ENCODE measurements at regions of chr3 and their contacts with region 1.

Region 1: GRCh38 chr3:128075516-128076482 is 23.6 kb downstream of the SEC61A1 start:
- DNase-seq: peak; percentile 76 to 92
- H3K4me3 ChIP-seq: peak overlapping the region; percentile 51 to 62
- H3K27ac ChIP-seq: peak overlapping the region; percentile 51 to 64
- H3K4me1 ChIP-seq: peaks cover 0 to 26% (median 21%) of the 10 kb centered on the region in 4 donors
- H3K27me3 ChIP-seq: no peaks in the 10 kb centered on the region
- CTCF ChIP-seq: peak; percentile 91 to 98

Region 2: DNA sequence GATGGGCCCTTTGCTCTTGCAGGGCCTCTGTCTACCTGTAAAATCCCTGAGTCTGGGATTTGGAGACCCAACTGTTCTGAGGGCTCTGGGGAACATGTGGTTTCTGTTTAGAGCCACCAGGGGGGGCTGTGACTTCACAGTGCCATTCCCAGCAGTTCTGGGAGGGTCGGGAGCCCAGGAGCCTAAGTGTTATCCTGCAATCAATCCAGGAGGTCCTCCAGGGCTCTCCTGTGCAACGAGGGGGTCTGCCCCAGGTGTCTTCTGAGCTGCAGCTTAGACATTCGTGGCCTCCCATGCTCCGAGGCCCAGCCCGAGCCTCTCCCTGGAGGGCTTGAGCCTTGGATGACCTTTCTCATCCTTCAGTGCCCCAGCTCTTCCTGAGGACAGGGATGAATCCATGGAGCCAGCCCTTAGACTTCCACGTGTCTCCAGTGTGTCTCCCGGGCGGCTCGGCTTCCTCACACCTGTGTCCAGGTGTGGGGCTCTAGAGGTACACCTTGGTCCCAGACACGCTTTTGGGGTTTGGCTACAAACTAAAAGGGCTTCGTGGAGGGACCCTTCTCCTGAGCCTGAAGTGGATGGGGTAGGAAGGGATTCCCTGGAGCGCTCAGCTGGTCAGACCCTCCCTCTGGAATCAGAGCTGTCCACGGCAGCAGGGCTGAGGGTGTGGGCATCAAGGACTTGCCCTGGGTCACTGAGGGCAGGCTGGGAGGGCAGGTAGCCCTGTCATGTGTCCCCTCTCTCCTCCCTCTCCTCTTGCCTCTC is 423.4 kb before region 1 on chr3:
- intact Hi-C with region 1: loop called (anchors 10 kb)
- DNase-seq: peak; percentile 55 to 75
- H3K4me3 ChIP-seq: no peak overlapping the region
- H3K27ac ChIP-seq: no peak overlapping the region
- H3K4me1 ChIP-seq: peaks cover 0 to 26% (median 7%) of the 10 kb centered on the region in 4 donors
- H3K27me3 ChIP-seq: no peaks in the 10 kb centered on the region
- CTCF ChIP-seq: peak; percentile 88 to 91

Region 3: DNA sequence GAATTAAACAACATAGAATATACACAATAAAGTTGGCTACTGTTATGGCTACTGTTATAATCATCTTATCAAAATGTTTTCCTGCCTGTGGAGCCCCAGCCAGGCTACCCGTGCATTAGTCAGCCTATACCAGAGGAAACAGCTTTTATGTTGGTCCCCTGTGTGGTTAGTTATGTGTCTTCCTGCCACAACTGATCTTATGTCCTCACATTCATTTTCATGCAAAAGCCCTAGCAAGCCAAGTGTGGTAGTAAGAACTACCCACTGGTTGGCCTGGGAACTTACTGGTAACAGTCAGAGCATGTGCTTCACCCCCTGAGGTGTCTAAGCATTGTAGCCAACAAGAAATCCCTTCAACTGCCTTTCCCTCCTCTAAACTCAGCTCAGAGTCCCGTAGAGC is 275.3 kb before region 1 on chr3:
- intact Hi-C with region 1: no loop called
- DNase-seq: no peak
- H3K4me3 ChIP-seq: no peak overlapping the region
- H3K27ac ChIP-seq: no peak overlapping the region
- H3K4me1 ChIP-seq: peaks cover 0 to 38% (median 5%) of the 10 kb centered on the region in 4 donors
- H3K27me3 ChIP-seq: no peaks in the 10 kb centered on the region
- CTCF ChIP-seq: no peak

Region 4: GRCh38 chr3:128123538-128124368 is 48.0 kb after region 1 on chr3 and contains the start of gene RUVBL1:
- intact Hi-C with region 1: loop called (anchors 10 kb)
- DNase-seq: peak; percentile 96 to 98
- H3K4me3 ChIP-seq: peak within 1 kb of the TSS; percentile 74 to 86
- H3K27ac ChIP-seq: peak within 1 kb of the TSS; percentile 56 to 71
- H3K4me1 ChIP-seq: peaks cover 0 to 13% (median 11%) of the 10 kb centered on the region in 4 donors
- H3K27me3 ChIP-seq: no peaks in the 10 kb centered on the region
- CTCF ChIP-seq: no peak

Region 5: DNA sequence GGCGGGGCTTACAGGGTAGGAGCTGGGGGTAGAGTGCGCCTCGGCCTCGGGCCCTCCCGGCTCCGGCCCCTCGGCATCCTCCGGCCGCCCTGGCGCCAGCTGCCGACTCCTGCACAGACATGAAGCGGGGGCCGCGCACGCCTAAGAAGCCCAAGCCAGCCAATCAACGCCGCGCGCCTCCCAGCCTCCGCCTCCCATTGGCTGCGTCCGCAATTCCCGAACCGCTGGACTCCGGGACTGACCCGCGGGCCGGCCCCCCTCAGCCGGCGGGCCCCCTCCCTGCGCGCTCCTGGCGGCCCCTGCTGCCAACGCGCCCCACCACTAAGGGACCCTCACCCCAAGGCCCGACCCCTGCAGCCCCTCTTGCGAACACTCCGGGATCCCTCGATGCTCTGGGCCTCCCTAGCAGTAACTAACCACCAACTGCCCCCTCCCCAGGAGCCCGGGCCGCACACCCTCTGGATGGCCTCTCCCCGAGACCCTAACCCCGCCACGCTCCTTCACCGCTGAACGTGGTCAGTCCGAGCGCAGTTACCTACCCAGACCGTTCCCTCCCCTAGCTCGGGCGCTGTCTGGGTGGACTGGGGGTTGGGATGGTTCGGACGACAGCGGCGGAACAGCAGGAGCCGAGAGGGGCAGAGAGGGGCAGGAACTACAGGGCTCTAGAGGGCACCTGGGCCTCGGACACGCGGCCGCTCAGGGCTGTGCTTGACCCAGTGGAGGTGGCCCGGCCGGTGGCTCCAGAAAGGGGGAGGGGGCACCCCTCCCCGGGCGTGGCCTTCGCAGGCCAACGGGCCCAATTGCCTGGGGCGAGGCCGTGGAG is 412.2 kb after region 1 on chr3:
- intact Hi-C with region 1: loop called (anchors 5 kb)
- DNase-seq: peak; percentile 76 to 85
- H3K4me3 ChIP-seq: peak overlapping the region; percentile 51 to 52
- H3K27ac ChIP-seq: no peak overlapping the region
- H3K4me1 ChIP-seq: peaks cover 0 to 69% (median 60%) of the 10 kb centered on the region in 4 donors
- H3K27me3 ChIP-seq: peaks cover 13 to 98% of the 10 kb centered on the region in 2 donors
- CTCF ChIP-seq: no peak

Region 6: GRCh38 chr3:128607710-128608048 is 531.9 kb after region 1 on chr3:
- intact Hi-C with region 1: loop called (anchors 10 kb)
- DNase-seq: no peak
- H3K4me3 ChIP-seq: peak overlapping the region; percentile 52 to 61
- H3K27ac ChIP-seq: peak overlapping the region; percentile 51 to 69
- H3K4me1 ChIP-seq: peaks cover 0 to 12% (median 5%) of the 10 kb centered on the region in 4 donors
- H3K27me3 ChIP-seq: peaks cover 0 to 11% of the 10 kb centered on the region in 2 donors
- CTCF ChIP-seq: no peak

Measured in tibial artery (tissue), 4 donors.